WTC11 (cell line): ENCODE measurements at regions of chr14 and their contacts with region 1.

Region 1: DNA sequence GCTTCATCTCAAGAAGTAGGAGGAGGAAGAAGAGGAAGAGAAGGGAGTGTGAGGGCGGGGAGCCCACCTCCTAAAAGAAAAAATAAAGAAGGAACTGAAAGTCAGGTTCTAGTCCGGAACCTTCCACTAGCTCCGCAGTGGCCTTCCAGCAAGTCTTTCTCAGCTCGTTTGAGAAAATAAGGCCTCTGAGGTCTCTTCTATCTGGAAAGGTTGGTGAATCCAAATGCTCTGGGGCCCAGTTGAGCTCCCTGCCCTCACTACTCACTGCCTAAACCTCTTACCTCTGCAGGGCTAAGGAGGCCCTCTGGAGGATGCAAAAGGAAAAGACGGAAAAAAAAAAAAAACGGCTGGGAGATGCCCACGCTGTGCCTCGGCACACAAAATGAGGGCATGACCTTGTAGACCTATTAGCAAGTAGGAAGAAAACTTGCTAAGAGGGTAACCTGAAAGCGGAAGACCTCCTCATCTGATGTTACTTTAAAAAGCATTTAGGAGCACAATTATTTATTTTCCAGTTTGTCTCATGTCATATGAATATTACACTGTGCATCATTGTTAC is 35.9 kb downstream of the FBLN5 start:
- DNase-seq: peak; percentile 34
- ATAC-seq: peak; percentile 100
- H3K4me3 Mint-ChIP-seq: no peak overlapping the region
- H3K27ac Mint-ChIP-seq: no peak overlapping the region
- H3K4me1 Mint-ChIP-seq: peaks cover 7% of the 10 kb centered on the region
- H3K27me3 Mint-ChIP-seq: no peaks in the 10 kb centered on the region; the same call in 1 of the 2 replicates
- CTCF ChIP-seq: no peak

Region 2: GRCh38 chr14:91714805-91715204 is 196.7 kb before region 1 on chr14:
- CTCF ChIA-PET with region 1: interaction called, 17 read pairs
- POLR2A ChIA-PET with region 1: no interaction called
- DNase-seq: peak; percentile 30
- ATAC-seq: peak; percentile 53; the same call in 1 of the 2 replicates
- H3K4me3 Mint-ChIP-seq: no peak overlapping the region
- H3K27ac Mint-ChIP-seq: no peak overlapping the region
- H3K4me1 Mint-ChIP-seq: no peaks in the 10 kb centered on the region
- H3K27me3 Mint-ChIP-seq: no peaks in the 10 kb centered on the region
- CTCF ChIP-seq: no peak

Region 3: DNA sequence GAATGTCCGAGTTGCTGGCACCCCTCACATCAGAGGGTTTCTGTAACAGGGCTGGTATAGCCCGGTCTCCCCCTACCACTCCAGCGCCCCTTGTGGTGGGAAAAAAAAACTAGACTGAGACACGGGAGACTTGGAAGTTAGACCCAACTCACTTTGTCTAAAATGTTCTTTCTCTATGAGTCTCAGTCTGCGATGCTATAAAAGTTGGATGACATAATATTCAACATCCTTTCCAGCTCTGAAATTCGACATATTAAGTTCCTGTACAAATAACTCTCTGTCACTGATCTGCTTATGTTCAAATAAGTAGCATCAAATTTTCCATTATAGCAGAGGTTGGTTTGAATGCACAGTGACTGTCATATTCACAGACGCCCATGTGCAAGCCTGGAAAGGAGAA is 18.5 kb before region 1 on chr14:
- CTCF ChIA-PET with region 1: interaction called, 45 read pairs
- POLR2A ChIA-PET with region 1: no interaction called
- DNase-seq: peak; percentile 62
- ATAC-seq: peak; percentile 80
- H3K4me3 Mint-ChIP-seq: no peak overlapping the region
- H3K27ac Mint-ChIP-seq: no peak overlapping the region
- H3K4me1 Mint-ChIP-seq: peaks cover 16% of the 10 kb centered on the region
- H3K27me3 Mint-ChIP-seq: no peaks in the 10 kb centered on the region
- CTCF ChIP-seq: peak; percentile 51; the same call in 1 of the 2 replicates

Region 4: DNA sequence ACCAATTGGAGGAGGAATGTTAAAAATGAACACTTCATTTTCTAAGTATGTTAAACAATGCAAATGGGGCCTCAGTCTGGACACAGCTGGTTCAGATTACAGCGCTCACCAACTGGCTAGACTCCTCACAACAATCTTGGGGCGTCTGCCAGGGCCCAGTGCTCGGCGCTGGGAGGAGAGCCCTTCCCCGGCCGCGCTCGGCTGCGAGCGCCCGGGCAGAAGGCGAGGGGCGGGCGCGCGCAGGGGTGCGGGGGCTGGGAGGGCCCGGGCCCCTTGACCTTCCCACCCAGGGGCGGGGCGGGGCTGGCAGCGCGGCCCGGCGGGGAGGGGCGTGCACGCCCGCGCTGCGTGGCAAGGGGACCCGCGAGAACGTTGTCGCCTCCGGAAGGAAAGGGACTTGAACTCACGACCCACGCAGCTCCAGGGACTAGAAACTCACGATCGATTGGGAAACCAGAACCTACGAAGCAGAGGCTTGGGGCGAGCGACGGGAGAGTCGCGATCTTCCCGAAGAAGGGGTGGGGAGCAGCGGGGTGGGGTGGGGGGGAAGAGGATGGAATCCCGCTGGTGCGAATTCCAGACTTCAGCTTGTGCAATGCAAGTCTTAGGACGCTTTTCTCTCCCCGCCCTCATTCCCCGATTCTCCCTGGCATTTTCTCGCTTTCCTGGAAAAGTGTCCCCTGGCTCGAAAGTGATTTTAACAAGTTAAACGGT is 36.1 kb after region 1 on chr14 and contains the start of gene FBLN5:
- CTCF ChIA-PET with region 1: interaction called, 11 read pairs
- POLR2A ChIA-PET with region 1: no interaction called
- DNase-seq: peak; percentile 58
- ATAC-seq: peak; percentile 90
- H3K4me3 Mint-ChIP-seq: peak within 1 kb of the TSS; percentile 83
- H3K27ac Mint-ChIP-seq: no peak within 1 kb of the TSS
- H3K4me1 Mint-ChIP-seq: peaks cover 15% of the 10 kb centered on the region
- H3K27me3 Mint-ChIP-seq: peaks cover 42% of the 10 kb centered on the region
- CTCF ChIP-seq: no peak
- total RNA-seq, gene FBLN5: 2.7 to 4.0 TPM (median 3.6 TPM) in 3 replicates